ENCODE measurements at regions of chr11 and their contacts with region 1.

Region 1: GRCh38 chr11:134050541-134051383 is 18.1 kb upstream of the JAM3 start:
- DNase-seq: no peak
- H3K4me3 ChIP-seq: peak overlapping the region in 3 of 4 donors; percentile 6 to 54 (median 31)
- H3K27ac ChIP-seq: peak overlapping the region in 1 of 4 donors; percentile 49
- H3K4me1 ChIP-seq: peaks cover 8 to 31% (median 11%) of the 10 kb centered on the region in 3 donors
- H3K27me3 ChIP-seq: peaks cover 0 to 40% (median 0%) of the 10 kb centered on the region in 4 donors
- CTCF ChIP-seq: peak; percentile 78 to 91 (median 89)
- POLR2A ChIP-seq: no peak

Region 2: GRCh38 chr11:133927690-133928627 is 122.8 kb before region 1 on chr11:
- intact Hi-C with region 1: loop called (anchors 5 kb)
- DNase-seq: no peak
- H3K4me3 ChIP-seq: peak overlapping the region in 3 of 4 donors; percentile 15 to 45 (median 32)
- H3K27ac ChIP-seq: peak overlapping the region in 1 of 4 donors; percentile 3
- H3K4me1 ChIP-seq: peaks cover 12 to 21% (median 13%) of the 10 kb centered on the region in 3 donors
- H3K27me3 ChIP-seq: no peaks in the 10 kb centered on the region
- CTCF ChIP-seq: peak in 5 of 6 experiments; percentile 75 to 91 (median 82)
- POLR2A ChIP-seq: no peak

Region 3: DNA sequence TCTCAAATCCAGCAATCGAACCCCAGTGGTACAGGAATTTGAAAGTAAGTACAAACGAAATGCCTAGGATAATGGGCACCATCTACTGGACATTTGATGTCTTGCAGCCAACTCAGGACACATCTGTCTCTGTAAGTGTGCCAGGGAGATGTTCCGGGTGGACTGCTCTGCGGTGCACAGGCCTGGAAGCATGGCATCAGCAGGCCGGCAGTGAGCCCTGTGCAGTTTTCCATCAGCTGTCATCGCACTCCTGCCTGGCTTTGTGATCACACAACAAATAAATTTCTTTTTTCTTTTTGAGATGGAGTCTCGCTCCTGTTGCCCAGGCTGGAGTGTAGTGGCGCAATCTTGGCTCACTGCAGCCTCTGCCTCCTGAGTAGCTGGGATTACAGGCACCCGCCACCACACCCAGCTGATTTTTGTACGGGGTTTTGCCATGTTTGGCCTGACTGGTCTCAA is 89.1 kb after region 1 on chr11:
- intact Hi-C with region 1: loop called (anchors 5 kb)
- DNase-seq: no peak
- H3K4me3 ChIP-seq: no peak overlapping the region
- H3K27ac ChIP-seq: peak overlapping the region in 3 of 4 donors; percentile 42 to 59 (median 55)
- H3K4me1 ChIP-seq: peaks cover 0 to 9% (median 6%) of the 10 kb centered on the region in 3 donors
- H3K27me3 ChIP-seq: no peaks in the 10 kb centered on the region
- CTCF ChIP-seq: peak; percentile 46 to 81 (median 73)
- POLR2A ChIP-seq: no peak

Region 4: DNA sequence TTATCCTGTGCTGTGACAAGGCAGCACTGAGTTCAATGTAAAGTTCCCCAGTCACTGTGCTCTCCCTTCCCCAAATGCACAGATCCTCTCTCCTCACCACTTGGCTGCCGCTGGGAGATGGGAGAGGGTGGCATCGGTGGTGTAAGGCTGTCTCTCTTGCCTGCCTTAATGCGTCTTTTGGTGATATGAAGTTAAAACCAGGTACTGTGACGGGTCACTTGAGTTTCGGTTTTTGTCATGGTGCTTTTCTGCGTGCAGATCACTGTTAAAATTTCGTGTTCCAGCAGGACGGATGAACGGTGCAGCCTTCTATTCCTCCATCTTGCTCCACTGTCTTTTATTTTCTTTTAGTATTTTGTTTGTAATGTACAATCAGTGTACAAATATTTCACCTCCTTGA is 299.6 kb after region 1 on chr11:
- intact Hi-C with region 1: no loop called
- DNase-seq: no peak
- H3K4me3 ChIP-seq: no peak overlapping the region
- H3K27ac ChIP-seq: no peak overlapping the region
- H3K4me1 ChIP-seq: peaks cover 0 to 6% (median 0%) of the 10 kb centered on the region in 3 donors
- H3K27me3 ChIP-seq: no peaks in the 10 kb centered on the region
- CTCF ChIP-seq: no peak
- POLR2A ChIP-seq: no peak